ENCODE measurements at regions of chr12 and their contacts with region 1.

Region 1: GRCh38 chr12:57046947-57047890 is 2.7 kb downstream of the MYO1A start:
- DNase-seq: peak; percentile 85
- ATAC-seq: peak; percentile 89
- H3K4me3 Mint-ChIP-seq: peak overlapping the region; percentile 7
- H3K27ac Mint-ChIP-seq: peak overlapping the region; percentile 86
- H3K4me1 Mint-ChIP-seq: peaks cover 40% of the 10 kb centered on the region
- H3K27me3 Mint-ChIP-seq: no peaks in the 10 kb centered on the region
- CTCF ChIP-seq: no peak

Region 2: GRCh38 chr12:57019983-57020719 is 27.1 kb before region 1 on chr12:
- CTCF ChIA-PET with region 1: interaction called, 13 read pairs
- POLR2A ChIA-PET with region 1: interaction called, 15 read pairs
- intact Hi-C with region 1: no loop called
- DNase-seq: no peak
- ATAC-seq: no peak
- H3K4me3 Mint-ChIP-seq: no peak overlapping the region
- H3K27ac Mint-ChIP-seq: peak overlapping the region; percentile 20
- H3K4me1 Mint-ChIP-seq: peaks cover 8% of the 10 kb centered on the region
- H3K27me3 Mint-ChIP-seq: no peaks in the 10 kb centered on the region
- CTCF ChIP-seq: no peak

Region 3: DNA sequence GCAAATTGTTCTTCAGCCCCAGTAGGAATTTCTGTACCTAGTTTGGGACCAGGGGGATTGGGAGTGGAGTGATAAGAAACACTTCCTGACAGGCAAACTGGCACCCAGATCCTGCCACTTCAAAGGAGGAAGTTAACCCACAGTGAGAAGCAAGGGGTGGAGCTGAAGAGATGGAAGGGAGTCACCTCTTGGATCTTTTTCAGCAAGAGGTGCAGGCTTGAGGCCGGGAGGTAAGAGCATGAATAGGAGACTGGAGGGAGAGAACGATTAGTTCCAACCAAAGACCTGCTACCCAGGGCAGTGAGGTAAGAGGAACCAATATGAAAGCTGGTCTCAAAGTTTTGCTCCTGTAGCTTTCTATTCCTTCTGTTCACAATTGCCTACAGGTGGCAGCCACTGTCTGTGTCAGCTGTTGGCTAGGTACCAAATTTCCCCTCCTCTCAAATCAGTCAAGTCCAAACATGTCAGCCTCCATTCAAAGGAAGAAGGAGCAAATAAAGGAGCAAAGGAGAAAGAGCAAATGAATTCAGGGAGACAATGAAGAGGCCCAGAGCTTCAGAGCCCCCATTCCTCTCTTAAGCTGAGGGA is 16.0 kb before region 1 on chr12:
- CTCF ChIA-PET with region 1: interaction called, 9 read pairs
- POLR2A ChIA-PET with region 1: interaction called, 21 read pairs
- intact Hi-C with region 1: no loop called
- DNase-seq: peak; percentile 39
- ATAC-seq: peak; percentile 42
- H3K4me3 Mint-ChIP-seq: no peak overlapping the region
- H3K27ac Mint-ChIP-seq: peak overlapping the region; percentile 26
- H3K4me1 Mint-ChIP-seq: peaks cover 39% of the 10 kb centered on the region
- H3K27me3 Mint-ChIP-seq: no peaks in the 10 kb centered on the region
- CTCF ChIP-seq: no peak

Region 4: GRCh38 chr12:57069523-57069922 is 22.3 kb after region 1 on chr12:
- CTCF ChIA-PET with region 1: interaction called, 10 read pairs
- POLR2A ChIA-PET with region 1: interaction called, 3 read pairs
- intact Hi-C with region 1: no loop called
- DNase-seq: peak; percentile 79
- ATAC-seq: peak; percentile 90
- H3K4me3 Mint-ChIP-seq: peak overlapping the region; percentile 62
- H3K27ac Mint-ChIP-seq: peak overlapping the region; percentile 90
- H3K4me1 Mint-ChIP-seq: peaks cover 71% of the 10 kb centered on the region
- H3K27me3 Mint-ChIP-seq: no peaks in the 10 kb centered on the region
- CTCF ChIP-seq: peak; percentile 86

Region 5: GRCh38 chr12:57238854-57239554 is 191.8 kb after region 1 on chr12:
- CTCF ChIA-PET with region 1: no interaction called
- POLR2A ChIA-PET with region 1: no interaction called
- intact Hi-C with region 1: no loop called
- DNase-seq: peak; percentile 92
- ATAC-seq: peak; percentile 73
- H3K4me3 Mint-ChIP-seq: peak overlapping the region; percentile 83
- H3K27ac Mint-ChIP-seq: no peak overlapping the region
- H3K4me1 Mint-ChIP-seq: peaks cover 62% of the 10 kb centered on the region
- H3K27me3 Mint-ChIP-seq: peaks cover 39% of the 10 kb centered on the region
- CTCF ChIP-seq: peak; percentile 100

Measured in activated CD8-positive, alpha-beta T cell treated with anti-CD3 and anti-CD28 coated beads for 36 hours (primary cell).